ENCODE measurements at regions of chr19 and their contacts with region 1.

Region 1: GRCh38 chr19:23273590-23274413 is 23.6 kb upstream of the ZNF724 start:
- DNase-seq: peak; percentile 84 to 96
- H3K4me3 ChIP-seq: peak overlapping the region; percentile 78 to 98 (median 93)
- H3K27ac ChIP-seq: peak overlapping the region; percentile 99
- H3K4me1 ChIP-seq: peaks cover 0 to 6% (median 1%) of the 10 kb centered on the region in 4 experiments; a peak in 3 of 7 replicates
- H3K27me3 ChIP-seq: no peaks in the 10 kb centered on the region
- CTCF ChIP-seq: no peak
- EP300 ChIP-seq: no peak
- POLR2A ChIP-seq: peak; percentile 95 to 99
- RAD21 ChIP-seq: no peak; a peak in 2 of 4 replicates

Region 2: DNA sequence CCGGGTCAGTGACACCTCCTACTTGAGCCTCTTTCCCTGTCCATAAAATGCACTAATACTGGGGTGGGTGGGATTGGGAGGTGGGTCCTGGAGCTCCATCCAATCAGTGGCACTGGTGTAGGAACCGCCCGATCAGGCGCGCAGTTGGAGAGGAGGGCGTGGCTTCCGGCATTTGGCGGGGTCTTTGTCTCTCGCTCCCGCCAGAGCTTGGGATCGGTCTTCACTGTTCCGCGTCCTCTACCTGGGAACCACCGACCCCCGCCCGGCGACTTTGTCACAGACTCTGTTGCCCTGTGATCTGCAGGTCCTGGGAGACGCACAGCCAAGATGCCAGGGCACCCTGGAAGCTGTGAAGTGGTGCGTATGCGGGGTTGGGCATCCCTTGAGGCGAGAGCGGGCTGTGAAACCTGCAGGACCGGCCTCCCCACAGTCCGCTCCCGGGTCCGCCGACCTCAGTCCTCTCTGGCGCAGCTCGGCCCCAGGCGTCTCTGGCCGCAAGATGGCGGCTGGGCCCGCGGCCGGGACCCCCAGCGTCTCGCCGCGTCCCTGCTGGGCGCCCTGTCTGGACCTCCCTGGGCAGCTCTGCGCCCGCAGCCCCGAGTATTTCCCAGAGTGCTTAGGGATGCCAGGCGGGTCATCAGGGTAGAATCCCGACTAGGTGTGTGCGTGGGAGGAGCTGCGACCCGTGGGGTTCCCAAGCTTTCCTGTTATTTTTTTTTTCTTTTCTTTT is 198.6 kb before region 1 on chr19:
- CTCF ChIA-PET with region 1: no interaction called
- POLR2A ChIA-PET with region 1: interaction called, 17 read pairs
- DNase-seq: peak; percentile 92 to 95
- H3K4me3 ChIP-seq: peak overlapping the region; percentile 84 to 99 (median 97)
- H3K27ac ChIP-seq: peak overlapping the region; percentile 100
- H3K4me1 ChIP-seq: peaks cover 0 to 2% (median 0%) of the 10 kb centered on the region in 4 experiments; a peak in 1 of 7 replicates
- H3K27me3 ChIP-seq: no peaks in the 10 kb centered on the region
- CTCF ChIP-seq: no peak
- EP300 ChIP-seq: no peak; a peak in 1 of 3 replicates
- POLR2A ChIP-seq: peak; percentile 94 to 99
- RAD21 ChIP-seq: peak in 1 of 2 experiments; percentile 7; a peak in 1 of 4 replicates

Region 3: DNA sequence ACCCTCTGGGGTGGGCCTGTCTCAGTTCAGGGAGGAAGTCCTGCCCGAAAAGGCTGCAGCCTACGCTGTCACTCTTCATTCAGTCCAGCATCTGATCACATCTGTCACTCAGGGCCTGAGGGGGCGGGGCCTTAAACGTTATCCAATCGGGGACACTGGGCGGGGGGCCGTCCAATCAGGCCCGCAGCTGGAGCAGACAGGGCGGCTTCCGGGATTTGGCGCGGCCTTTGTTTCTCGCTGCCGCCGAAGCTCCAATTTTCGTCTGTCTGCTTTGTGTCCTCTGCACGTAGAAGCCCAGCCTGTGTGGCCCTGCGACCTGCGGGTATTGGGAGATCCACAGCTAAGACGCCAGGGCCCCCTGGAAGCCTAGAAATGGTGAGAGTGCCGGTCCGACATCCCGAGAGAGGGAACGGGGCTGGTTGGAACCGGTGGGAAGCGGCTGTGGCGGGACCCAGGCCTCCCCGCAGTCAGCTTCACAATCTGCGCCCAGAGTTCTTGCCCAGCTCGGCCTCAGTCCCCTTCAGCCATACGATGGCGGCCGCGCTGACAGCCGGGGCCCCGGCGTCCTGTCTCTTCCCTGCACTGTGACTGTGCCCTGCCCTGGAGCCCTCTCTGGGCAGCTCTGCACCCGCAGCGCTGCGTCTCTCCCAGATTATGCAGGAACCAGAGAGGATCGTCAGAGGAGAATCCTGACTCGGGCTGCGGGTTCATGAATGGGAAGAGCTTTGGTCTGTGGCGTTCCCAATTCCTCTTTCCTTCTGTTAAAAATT is 156.8 kb before region 1 on chr19 and contains the start of gene ZNF730:
- CTCF ChIA-PET with region 1: no interaction called
- POLR2A ChIA-PET with region 1: interaction called, 25 read pairs
- DNase-seq: peak; percentile 66 to 91
- H3K4me3 ChIP-seq: peak within 1 kb of the TSS; percentile 50 to 81 (median 68)
- H3K27ac ChIP-seq: peak within 1 kb of the TSS; percentile 98
- H3K4me1 ChIP-seq: no peaks in the 10 kb centered on the region
- H3K27me3 ChIP-seq: no peaks in the 10 kb centered on the region
- CTCF ChIP-seq: no peak
- EP300 ChIP-seq: 0 out of 3 replicates have a peak, but pooled peaks of 1 of the 2 experiments have one; percentile 4
- POLR2A ChIP-seq: peak; percentile 56 to 96
- RAD21 ChIP-seq: no peak
- total RNA-seq, gene ZNF730: 24.7 and 29.4 TPM in 2 replicates

Region 4: GRCh38 chr19:23222998-23223652 is 50.7 kb before region 1 on chr19:
- CTCF ChIA-PET with region 1: no interaction called
- POLR2A ChIA-PET with region 1: no interaction called
- DNase-seq: no peak
- H3K4me3 ChIP-seq: peak overlapping the region in 1 of 4 experiments; percentile 10; a peak in 1 of 8 replicates
- H3K27ac ChIP-seq: no peak overlapping the region
- H3K4me1 ChIP-seq: no peaks in the 10 kb centered on the region
- H3K27me3 ChIP-seq: no peaks in the 10 kb centered on the region
- CTCF ChIP-seq: no peak
- EP300 ChIP-seq: no peak
- POLR2A ChIP-seq: no peak
- RAD21 ChIP-seq: no peak

Region 5: GRCh38 chr19:23249911-23250649 is 23.7 kb before region 1 on chr19 and contains the start of gene ZNF724:
- CTCF ChIA-PET with region 1: no interaction called
- POLR2A ChIA-PET with region 1: interaction called, 383 read pairs
- DNase-seq: peak; percentile 89 to 94
- H3K4me3 ChIP-seq: peak within 1 kb of the TSS; percentile 62 to 98 (median 92)
- H3K27ac ChIP-seq: peak within 1 kb of the TSS; percentile 97
- H3K4me1 ChIP-seq: peaks cover 0 to 3% (median 0%) of the 10 kb centered on the region in 4 experiments; a peak in 2 of 7 replicates
- H3K27me3 ChIP-seq: no peaks in the 10 kb centered on the region
- CTCF ChIP-seq: no peak
- EP300 ChIP-seq: no peak
- POLR2A ChIP-seq: peak; percentile 79 to 99
- RAD21 ChIP-seq: no peak; a peak in 1 of 4 replicates
- total RNA-seq, gene ZNF724: 62.3 and 67.2 TPM in 2 replicates

Region 6: DNA sequence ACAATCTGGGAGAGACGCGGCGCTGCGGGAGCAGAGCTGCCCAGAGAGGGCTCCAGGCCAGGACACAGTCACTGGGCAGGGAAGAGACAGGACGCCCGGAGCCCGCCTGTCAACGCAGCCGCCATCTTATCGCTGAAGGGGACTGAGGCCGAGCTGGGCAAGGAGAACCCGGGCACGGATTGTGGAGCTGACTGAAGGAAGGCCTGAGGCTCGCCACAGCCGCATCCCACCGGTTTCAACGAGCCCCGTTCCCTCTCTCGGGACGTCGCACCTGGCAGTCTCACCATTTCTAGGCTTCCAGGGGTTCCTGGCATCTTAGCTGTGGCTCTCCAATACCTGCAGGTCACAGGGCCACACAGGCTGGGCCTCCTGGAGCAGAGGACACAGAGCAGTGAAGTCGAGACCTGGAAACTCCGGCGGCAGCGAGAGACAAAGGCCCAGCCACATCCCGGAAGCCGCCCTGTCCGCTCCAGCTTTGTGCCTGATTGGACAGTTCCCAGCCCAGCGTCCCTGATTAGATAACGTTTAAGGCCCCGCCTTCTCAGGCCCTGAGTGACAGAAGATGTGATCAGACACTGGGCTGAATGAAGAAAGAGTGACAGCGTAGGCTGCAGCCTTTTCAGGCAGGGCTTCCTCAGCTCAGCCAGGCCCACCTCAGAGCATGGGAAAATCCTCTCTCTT is 121.4 kb after region 1 on chr19 and contains the start of gene ZNF91:
- CTCF ChIA-PET with region 1: no interaction called
- POLR2A ChIA-PET with region 1: interaction called, 18 read pairs
- DNase-seq: peak; percentile 87 to 91
- H3K4me3 ChIP-seq: peak within 1 kb of the TSS; percentile 78 to 98 (median 90)
- H3K27ac ChIP-seq: peak within 1 kb of the TSS; percentile 96
- H3K4me1 ChIP-seq: peaks cover 0 to 4% (median 3%) of the 10 kb centered on the region in 4 experiments; a peak in 4 of 7 replicates
- H3K27me3 ChIP-seq: no peaks in the 10 kb centered on the region
- CTCF ChIP-seq: no peak
- EP300 ChIP-seq: no peak
- POLR2A ChIP-seq: peak; percentile 97 to 99
- RAD21 ChIP-seq: no peak
- total RNA-seq, gene ZNF91: 35.1 and 36.7 TPM in 2 replicates

Region 7: DNA sequence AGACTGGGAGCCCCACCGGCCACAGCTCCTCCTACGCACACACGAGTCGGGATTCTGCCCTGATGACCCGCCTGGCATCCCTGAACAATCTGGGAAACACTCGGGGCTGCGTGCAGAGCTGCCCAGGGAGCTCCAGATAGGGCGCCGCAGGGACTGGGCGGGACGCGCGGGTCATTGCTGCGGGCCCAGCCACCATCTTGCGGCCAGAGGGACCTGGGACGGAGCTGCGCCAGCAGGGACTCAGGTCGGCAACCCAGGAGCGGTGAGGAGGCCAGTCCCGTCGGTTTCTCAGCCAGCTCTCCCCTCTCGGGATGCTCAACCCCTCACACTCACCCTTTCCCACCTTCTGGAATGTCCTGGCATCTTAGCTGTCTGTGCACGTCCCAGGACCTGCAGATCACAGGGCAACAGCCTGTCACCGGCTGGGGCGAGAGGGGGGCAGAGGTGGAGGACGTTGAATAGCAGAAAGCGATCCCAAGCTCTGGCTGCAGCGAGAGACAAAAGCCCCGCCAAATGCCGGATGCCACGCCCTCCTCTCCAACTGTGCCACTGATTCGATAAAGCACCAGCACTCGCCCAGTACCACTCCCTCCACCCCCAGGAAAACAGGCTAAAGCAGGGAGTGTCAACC is 141.9 kb after region 1 on chr19:
- CTCF ChIA-PET with region 1: no interaction called
- POLR2A ChIA-PET with region 1: interaction called, 11 read pairs
- DNase-seq: peak; percentile 79 to 89
- H3K4me3 ChIP-seq: peak overlapping the region; percentile 59 to 97 (median 92)
- H3K27ac ChIP-seq: peak overlapping the region; percentile 90
- H3K4me1 ChIP-seq: no peaks in the 10 kb centered on the region
- H3K27me3 ChIP-seq: no peaks in the 10 kb centered on the region
- CTCF ChIP-seq: no peak
- EP300 ChIP-seq: no peak
- POLR2A ChIP-seq: peak in 1 of 2 experiments; percentile 90; a peak in 2 of 3 replicates
- RAD21 ChIP-seq: no peak

Measured in H1 (cell line).